ENCODE measurements at regions of chr15 and their contacts with region 1.

Region 1: DNA sequence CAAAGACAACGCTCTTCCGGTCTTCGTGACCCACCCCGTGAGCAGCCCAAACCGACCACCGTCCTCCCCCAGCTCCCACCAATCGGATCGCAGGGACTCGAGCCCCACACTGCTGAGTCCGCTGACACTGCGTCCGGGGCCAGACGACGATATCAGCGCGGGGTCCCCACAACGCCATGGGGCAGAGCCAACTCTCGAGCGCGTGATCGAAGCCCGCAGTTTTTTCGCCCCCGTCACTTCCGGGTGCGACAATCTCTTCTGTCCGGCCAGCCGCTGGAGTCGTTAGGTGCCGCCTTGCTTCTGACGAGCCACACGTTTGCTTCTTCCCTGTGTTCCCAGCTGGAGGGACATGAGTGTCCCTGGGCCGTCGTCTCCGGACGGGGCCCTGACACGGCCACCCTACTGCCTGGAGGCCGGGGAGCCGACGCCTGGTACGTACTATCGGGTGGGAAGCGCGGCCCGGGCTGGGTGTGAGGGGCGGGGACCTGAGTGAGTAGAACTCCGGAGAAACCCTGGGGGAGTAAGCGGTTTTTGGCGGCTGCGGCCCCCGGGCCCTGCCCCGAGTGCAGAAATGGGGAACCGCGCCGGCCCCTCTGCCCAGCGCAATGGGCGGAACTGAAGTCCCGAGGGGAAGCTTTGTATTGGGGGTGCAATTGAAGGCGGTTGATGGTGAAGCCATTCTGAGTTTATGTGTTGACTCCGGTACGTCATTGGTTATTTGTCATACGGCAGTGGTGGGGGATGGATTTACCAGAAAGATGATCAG is at the start of gene BLOC1S6:
- DNase-seq: peak; percentile 93
- ATAC-seq: peak; percentile 87
- H3K4me3 Mint-ChIP-seq: peak within 1 kb of the TSS; percentile 98
- H3K27ac Mint-ChIP-seq: peak within 1 kb of the TSS; percentile 100
- H3K4me1 Mint-ChIP-seq: peaks cover 33% of the 10 kb centered on the region
- H3K27me3 Mint-ChIP-seq: peaks cover 4% of the 10 kb centered on the region
- total RNA-seq, gene BLOC1S6: 33.6 to 35.7 TPM

Region 2: DNA sequence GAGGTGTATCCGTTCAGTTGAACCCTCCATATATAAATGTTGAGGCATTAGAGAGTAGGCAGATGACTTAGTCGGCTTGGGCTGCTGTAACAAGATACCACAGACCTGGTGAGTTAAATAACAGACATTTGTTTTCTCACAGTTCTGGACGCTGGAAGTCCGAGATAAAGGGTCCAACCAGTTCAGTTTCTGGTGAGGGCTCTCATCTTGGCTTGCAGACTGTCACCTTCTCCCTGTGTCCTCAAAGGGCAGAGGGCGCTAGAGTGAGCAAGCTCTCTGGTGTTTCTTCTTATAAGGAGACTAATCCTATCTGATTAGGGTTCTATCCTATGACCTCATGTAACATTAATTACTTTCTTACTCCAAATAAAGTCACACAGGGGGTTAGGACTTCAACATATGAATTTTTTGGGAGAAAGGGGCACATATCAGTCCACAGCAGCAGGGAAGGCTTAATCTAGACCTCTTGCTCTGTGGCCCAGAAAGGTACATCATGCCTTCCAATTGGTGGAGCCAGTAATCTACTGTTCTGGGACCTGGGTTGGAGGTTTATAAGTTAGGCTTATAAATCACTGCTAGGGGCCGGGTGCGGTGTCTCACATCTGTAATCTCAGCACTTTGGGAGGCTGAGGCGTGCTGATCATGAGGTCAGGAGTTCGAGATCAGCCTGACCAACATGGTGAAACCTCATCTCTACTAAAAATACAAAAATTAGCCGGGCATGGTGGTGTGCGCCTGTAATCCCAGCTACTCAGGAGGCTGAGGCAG is 361.6 kb before region 1 on chr15:
- CTCF ChIA-PET with region 1: no interaction called
- DNase-seq: no peak
- ATAC-seq: no peak
- H3K4me3 Mint-ChIP-seq: no peak overlapping the region
- H3K27ac Mint-ChIP-seq: no peak overlapping the region
- H3K4me1 Mint-ChIP-seq: no peaks in the 10 kb centered on the region
- H3K27me3 Mint-ChIP-seq: peaks cover 17% of the 10 kb centered on the region

Region 3: GRCh38 chr15:45573961-45574629 is 13.2 kb before region 1 on chr15:
- CTCF ChIA-PET with region 1: interaction called, 10 read pairs
- DNase-seq: no peak
- ATAC-seq: no peak
- H3K4me3 Mint-ChIP-seq: no peak overlapping the region
- H3K27ac Mint-ChIP-seq: no peak overlapping the region
- H3K4me1 Mint-ChIP-seq: no peaks in the 10 kb centered on the region
- H3K27me3 Mint-ChIP-seq: peaks cover 40% of the 10 kb centered on the region